ENCODE measurements at regions of chr15 and their contacts with region 1.

Region 1: GRCh38 chr15:93882141-93882540 is 349.2 kb upstream of the MCTP2 start:
- DNase-seq: no peak
- ATAC-seq: peak in 7 of 8 donors; percentile 29 to 79 (median 67)
- H3K4me3 ChIP-seq: no peak overlapping the region
- H3K27ac ChIP-seq: peak overlapping the region in 4 of 10 donors; percentile 2 to 54 (median 32)
- H3K4me1 ChIP-seq: peaks cover 0 to 16% (median 2%) of the 10 kb centered on the region in 9 donors
- H3K27me3 ChIP-seq: peaks cover 0 to 7% (median 0%) of the 10 kb centered on the region in 7 donors
- CTCF ChIP-seq: no peak

Region 2: GRCh38 chr15:93826790-93827189 is 55.4 kb before region 1 on chr15:
- intact Hi-C with region 1: loop called in 1 of 10 experiments (anchors 10 kb)
- DNase-seq: peak in 1 of 2 donors; percentile 14
- ATAC-seq: peak; percentile 18 to 80 (median 60)
- H3K4me3 ChIP-seq: no peak overlapping the region
- H3K27ac ChIP-seq: peak overlapping the region in 2 of 10 donors; percentile 28 to 47
- H3K4me1 ChIP-seq: peaks cover 0 to 7% (median 0%) of the 10 kb centered on the region in 9 donors
- H3K27me3 ChIP-seq: no peaks in the 10 kb centered on the region
- CTCF ChIP-seq: no peak

Region 3: DNA sequence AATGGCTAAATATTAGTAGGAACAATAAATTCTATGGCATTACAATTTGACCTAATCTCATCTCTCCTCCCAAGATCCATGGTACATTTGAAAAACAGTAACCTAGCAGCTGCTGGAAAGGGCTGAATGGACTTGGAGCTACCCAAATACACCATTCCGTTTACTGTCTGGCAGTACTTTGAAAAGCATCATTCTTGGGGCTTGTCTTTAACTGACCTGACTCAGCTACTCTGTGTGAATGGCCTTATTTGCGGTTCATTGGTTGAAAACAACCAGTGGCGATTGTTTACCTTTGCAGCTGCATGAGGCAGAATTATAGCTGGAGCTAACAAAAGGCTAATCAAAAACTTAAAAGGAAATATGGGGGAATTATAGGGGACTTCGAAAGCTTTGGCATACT is 38.1 kb after region 1 on chr15:
- intact Hi-C with region 1: no loop called
- DNase-seq: no peak
- ATAC-seq: no peak
- H3K4me3 ChIP-seq: no peak overlapping the region
- H3K27ac ChIP-seq: no peak overlapping the region
- H3K4me1 ChIP-seq: no peaks in the 10 kb centered on the region
- H3K27me3 ChIP-seq: no peaks in the 10 kb centered on the region
- CTCF ChIP-seq: no peak

Region 4: DNA sequence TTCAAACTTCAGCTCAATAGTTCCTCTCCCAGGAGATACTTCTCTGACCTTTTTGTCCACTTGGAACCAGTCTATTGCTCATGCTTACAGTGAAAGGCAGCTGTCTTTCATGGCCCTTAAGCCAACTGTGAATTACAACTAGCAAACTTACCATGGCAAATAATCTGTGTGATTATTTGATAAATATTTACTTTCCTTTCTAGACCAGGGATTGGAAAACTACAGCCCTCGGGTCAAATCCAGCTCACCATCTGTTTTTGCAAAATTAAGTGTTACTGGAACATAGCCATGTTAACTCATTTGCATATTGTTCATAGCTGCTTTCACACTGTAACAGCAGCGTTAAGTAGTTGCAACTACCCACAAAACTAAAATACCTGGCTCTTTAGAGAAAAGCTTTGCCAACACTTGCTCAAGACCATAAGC is 60.1 kb after region 1 on chr15:
- intact Hi-C with region 1: loop called in 1 of 10 experiments (anchors 10 kb)
- DNase-seq: no peak
- ATAC-seq: peak in 4 of 8 donors; percentile 30 to 73 (median 53)
- H3K4me3 ChIP-seq: no peak overlapping the region
- H3K27ac ChIP-seq: peak overlapping the region in 6 of 10 donors; percentile 38 to 66 (median 54)
- H3K4me1 ChIP-seq: peaks cover 0 to 8% (median 0%) of the 10 kb centered on the region in 9 donors
- H3K27me3 ChIP-seq: peaks cover 0 to 5% (median 0%) of the 10 kb centered on the region in 7 donors
- CTCF ChIP-seq: no peak

Region 5: DNA sequence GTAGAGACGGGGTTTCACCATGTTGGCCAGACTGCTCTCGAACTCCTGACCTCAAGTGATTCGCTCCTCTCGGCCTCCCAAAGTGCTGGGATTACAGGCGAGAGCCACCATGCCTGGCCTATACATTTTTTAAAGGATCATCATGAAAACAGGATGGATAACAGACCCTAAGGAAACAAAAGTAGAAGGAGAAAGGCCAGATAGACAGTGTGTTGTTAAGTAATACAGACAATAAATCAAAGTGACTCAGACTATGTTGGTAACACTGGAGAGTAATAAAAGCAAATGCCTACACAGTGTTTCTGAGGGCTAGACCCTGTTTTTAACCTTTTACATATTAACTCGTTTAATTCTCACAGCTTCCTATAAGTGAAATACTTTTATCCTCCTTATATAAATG is 215.4 kb after region 1 on chr15:
- intact Hi-C with region 1: no loop called
- DNase-seq: no peak
- ATAC-seq: no peak
- H3K4me3 ChIP-seq: no peak overlapping the region
- H3K27ac ChIP-seq: no peak overlapping the region
- H3K4me1 ChIP-seq: no peaks in the 10 kb centered on the region
- H3K27me3 ChIP-seq: peaks cover 0 to 5% (median 0%) of the 10 kb centered on the region in 7 donors
- CTCF ChIP-seq: no peak